ENCODE measurements at regions of chr15 and their contacts with region 1.

Region 1: DNA sequence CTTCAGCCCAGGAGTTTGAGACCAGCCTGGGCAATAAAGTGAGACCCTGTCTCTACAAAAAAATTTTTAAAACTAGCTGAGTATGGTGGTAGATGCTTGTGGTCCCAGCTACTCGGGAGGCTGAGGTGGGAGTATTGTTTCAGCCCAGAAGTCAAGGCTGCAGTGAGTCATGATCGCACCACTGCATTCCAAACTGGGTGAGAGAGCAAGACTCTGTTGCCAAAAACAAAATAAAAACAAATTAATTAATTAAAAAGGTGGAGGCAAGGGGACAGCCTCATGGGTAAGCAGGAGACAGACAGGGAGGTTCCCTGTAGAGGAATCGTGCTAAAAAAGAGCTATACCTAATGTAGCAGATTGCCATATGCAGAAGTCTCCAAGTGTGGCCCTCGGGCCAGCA is 12.6 kb downstream of the HAPLN3 start:
- DNase-seq: no peak
- ATAC-seq: no peak
- H3K4me3 ChIP-seq: no peak overlapping the region
- H3K27ac ChIP-seq: no peak overlapping the region
- H3K4me1 ChIP-seq: no peaks in the 10 kb centered on the region
- H3K27me3 ChIP-seq: no peaks in the 10 kb centered on the region
- CTCF ChIP-seq: no peak

Region 2: GRCh38 chr15:88574655-88575054 is 308.1 kb before region 1 on chr15:
- intact Hi-C with region 1: no loop called
- DNase-seq: no peak
- ATAC-seq: no peak
- H3K4me3 ChIP-seq: no peak overlapping the region
- H3K27ac ChIP-seq: peak overlapping the region in 4 of 10 donors; percentile 7 to 60 (median 44)
- H3K4me1 ChIP-seq: peaks cover 0 to 26% (median 11%) of the 10 kb centered on the region in 9 donors
- H3K27me3 ChIP-seq: no peaks in the 10 kb centered on the region
- CTCF ChIP-seq: no peak

Region 3: DNA sequence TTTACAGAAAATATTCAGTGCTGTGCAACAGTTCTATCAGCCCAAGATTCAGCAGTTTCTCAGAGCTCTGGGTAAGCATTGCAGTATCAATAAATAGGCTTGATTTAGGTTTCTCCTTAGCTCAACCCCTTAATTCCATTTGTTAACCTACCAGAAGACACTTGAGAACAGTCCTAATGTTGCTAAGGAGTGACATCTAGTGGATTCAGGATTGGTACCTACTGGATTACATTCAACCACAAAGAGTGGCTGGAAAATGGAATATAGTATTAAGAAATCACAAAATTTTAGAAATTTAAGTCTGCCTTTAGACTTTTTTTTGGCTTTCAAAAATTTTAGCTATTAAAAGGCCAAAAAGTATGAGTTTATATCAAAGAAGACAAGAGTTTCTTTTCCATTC is 417.1 kb after region 1 on chr15:
- intact Hi-C with region 1: loop called in 1 of 10 experiments (anchors 10 kb)
- DNase-seq: no peak
- ATAC-seq: peak in 1 of 8 donors; percentile 53
- H3K4me3 ChIP-seq: no peak overlapping the region
- H3K27ac ChIP-seq: no peak overlapping the region
- H3K4me1 ChIP-seq: no peaks in the 10 kb centered on the region
- H3K27me3 ChIP-seq: no peaks in the 10 kb centered on the region
- CTCF ChIP-seq: peak in 6 of 9 donors; percentile 17 to 51 (median 41)